ENCODE measurements at regions of chr9 and their contacts with region 1.

Region 1: DNA sequence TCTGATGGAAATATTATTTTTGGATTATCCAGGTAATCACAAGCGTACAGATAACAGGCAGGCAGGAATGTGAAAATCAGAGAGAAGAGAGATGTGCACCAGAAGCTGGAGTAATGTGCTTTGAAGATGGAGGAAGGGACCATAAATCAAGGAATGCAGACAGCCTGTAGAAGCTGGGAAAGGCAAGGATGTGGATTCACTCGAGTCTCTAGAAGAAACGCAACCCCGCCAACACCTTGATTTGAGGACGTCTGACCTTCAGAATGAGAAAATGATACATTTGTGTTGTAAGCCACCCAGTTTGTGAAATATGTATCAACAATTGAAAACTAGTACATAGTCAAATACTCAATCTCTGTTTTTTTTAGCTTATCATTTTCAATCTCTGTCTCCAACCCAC is 207.6 kb upstream of the MPDZ start:
- DNase-seq: no peak
- ATAC-seq: no peak
- H3K4me3 ChIP-seq: no peak overlapping the region
- H3K27ac ChIP-seq: no peak overlapping the region
- H3K4me1 ChIP-seq: peaks cover 13% of the 10 kb centered on the region
- H3K27me3 ChIP-seq: no peaks in the 10 kb centered on the region
- CTCF ChIP-seq: no peak

Region 2: GRCh38 chr9:14372437-14373335 is 885.6 kb after region 1 on chr9:
- CTCF ChIA-PET with region 1: no interaction called
- POLR2A ChIA-PET with region 1: interaction called, 10 read pairs
- intact Hi-C with region 1: no loop called
- DNase-seq: peak; percentile 84
- ATAC-seq: peak; percentile 99
- H3K4me3 ChIP-seq: no peak overlapping the region
- H3K27ac ChIP-seq: peak overlapping the region; percentile 38
- H3K4me1 ChIP-seq: peaks cover 20% of the 10 kb centered on the region
- H3K27me3 ChIP-seq: no peaks in the 10 kb centered on the region
- CTCF ChIP-seq: no peak

Measured in PC-3 (cell line).